Calu3 (cell line): ENCODE measurements at regions of chr6 and their contacts with region 1.

Region 1: DNA sequence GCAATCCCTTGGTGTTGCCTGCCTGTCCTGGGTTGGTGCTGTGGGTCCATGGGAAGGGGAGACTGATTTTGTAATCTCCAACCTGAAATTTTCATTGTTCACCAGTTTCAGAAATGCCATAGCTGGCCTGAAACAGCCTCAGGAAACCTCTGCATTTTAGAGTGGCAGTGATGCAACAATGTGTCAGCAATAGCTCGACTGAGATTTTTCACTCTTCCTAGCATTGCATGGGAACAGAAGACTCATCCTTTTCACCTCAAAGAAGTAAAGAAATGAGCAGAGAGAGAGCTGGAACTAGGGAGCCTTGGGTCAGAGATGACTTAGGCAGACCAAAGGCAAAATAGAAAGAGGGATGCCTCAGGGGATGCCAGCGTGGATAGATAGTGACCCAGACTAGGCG is 23.7 kb upstream of the TMEM14A start:
- DNase-seq: no peak
- H3K4me3 Mint-ChIP-seq: no peak overlapping the region
- H3K27ac Mint-ChIP-seq: no peak overlapping the region
- H3K4me1 Mint-ChIP-seq: peaks cover 8% of the 10 kb centered on the region
- H3K27me3 Mint-ChIP-seq: peaks cover 68% of the 10 kb centered on the region
- CTCF ChIP-seq: no peak

Region 2: DNA sequence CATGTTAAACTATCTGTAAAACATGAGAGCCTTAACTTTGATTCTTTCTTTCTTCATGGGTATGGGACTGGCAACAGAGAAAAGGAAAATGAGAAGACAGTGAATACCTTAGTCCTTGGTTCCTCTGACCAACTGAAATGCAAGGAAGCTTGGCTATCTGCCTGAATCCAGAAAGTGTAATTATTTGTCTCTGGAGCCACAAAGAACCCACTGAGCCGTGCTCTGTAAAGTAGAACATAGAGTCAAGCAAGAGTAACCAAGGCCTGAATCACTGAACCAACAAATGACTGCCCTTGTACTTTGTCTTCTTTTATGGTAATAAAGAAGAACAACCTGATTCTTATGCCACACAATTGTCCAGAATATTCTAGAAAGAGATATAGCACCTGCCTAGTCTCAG is 587.4 kb before region 1 on chr6:
- CTCF ChIA-PET with region 1: no interaction called
- intact Hi-C with region 1: no loop called
- DNase-seq: no peak
- H3K4me3 Mint-ChIP-seq: no peak overlapping the region
- H3K27ac Mint-ChIP-seq: no peak overlapping the region
- H3K4me1 Mint-ChIP-seq: peaks cover 14% of the 10 kb centered on the region
- H3K27me3 Mint-ChIP-seq: no peaks in the 10 kb centered on the region
- CTCF ChIP-seq: no peak

Region 3: DNA sequence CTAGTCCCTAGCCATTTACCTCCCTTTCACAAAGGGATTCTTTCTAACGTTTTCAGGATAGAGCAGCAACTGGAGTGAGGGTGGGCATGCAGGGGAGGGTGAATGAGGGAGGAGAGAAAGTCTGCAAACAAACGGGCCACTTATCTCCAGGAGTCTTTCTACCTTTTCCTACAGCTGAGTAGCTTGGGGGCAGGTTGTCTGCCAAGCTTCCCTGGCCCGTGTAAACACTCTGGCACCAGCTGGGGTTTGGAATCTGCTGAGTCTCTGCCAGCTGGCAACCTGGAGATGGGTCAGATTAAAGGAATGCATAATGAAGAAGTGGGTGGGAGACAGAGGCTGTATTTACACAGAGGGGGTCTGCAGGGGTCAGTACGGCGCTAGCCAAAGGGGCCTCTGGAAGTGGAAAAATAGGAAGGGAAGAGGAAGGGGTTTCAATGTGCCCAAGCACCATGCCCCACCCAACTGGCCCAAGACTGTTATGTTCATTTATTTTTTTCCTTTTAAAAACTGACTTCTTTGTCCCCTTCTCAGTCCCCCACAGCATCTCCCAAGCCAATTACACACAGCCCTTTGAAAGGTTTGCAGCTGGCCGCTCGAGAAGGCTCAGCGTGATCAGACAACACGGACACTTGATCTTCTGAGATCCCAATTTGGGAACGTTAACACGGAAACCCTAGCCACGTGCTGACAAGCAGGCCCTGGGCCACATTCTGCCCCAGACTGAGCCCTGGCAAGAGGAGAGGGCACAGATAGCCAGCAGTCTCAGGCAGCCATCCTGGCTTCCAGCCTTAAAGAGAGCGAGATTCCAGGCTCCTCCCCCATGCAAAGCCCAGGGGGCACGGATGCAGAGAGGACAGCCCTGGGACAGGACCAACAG is 95.6 kb before region 1 on chr6:
- CTCF ChIA-PET with region 1: no interaction called
- intact Hi-C with region 1: no loop called
- DNase-seq: peak; percentile 54
- H3K4me3 Mint-ChIP-seq: peak overlapping the region; percentile 23
- H3K27ac Mint-ChIP-seq: peak overlapping the region; percentile 20
- H3K4me1 Mint-ChIP-seq: peaks cover 65% of the 10 kb centered on the region
- H3K27me3 Mint-ChIP-seq: no peaks in the 10 kb centered on the region
- CTCF ChIP-seq: no peak

Region 4: GRCh38 chr6:52577022-52577777 is 70.0 kb before region 1 on chr6 and contains the start of gene TRAM2:
- CTCF ChIA-PET with region 1: interaction called, 11 read pairs
- intact Hi-C with region 1: no loop called
- DNase-seq: peak; percentile 89
- H3K4me3 Mint-ChIP-seq: peak within 1 kb of the TSS; percentile 67
- H3K27ac Mint-ChIP-seq: peak within 1 kb of the TSS; percentile 40
- H3K4me1 Mint-ChIP-seq: peaks cover 36% of the 10 kb centered on the region
- H3K27me3 Mint-ChIP-seq: no peaks in the 10 kb centered on the region
- CTCF ChIP-seq: no peak
- total RNA-seq, gene TRAM2: 10.7 and 12.8 TPM in 2 replicates

Region 5: DNA sequence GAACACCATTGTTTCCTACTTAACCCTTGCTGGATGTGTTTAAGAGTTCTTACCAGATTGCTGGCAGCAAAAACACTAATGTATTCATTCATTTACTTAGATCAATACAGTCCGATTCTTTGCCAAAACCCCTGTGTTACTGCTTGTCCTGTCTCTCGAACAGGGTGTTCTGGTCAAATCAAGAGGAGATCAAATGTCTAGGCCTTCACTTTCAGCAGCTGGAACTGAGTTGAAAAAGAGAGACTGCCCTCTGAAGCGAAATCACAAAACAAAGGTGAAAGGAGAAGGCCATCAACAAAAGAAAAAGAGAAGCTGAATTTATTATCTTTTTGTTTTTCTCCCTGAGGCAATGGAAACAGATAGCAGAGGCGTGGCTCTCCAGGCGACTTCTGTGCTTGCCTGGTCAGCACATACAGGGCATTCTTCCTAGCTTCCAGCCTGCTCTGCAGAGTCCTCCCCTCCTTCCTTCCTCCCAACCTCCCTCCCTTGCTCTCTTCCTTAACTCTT is 545.5 kb after region 1 on chr6:
- CTCF ChIA-PET with region 1: no interaction called
- intact Hi-C with region 1: no loop called
- DNase-seq: no peak
- H3K4me3 Mint-ChIP-seq: no peak overlapping the region
- H3K27ac Mint-ChIP-seq: no peak overlapping the region
- H3K4me1 Mint-ChIP-seq: peaks cover 23% of the 10 kb centered on the region
- H3K27me3 Mint-ChIP-seq: no peaks in the 10 kb centered on the region
- CTCF ChIP-seq: no peak